A673 (cell line): ENCODE measurements at regions of chr17 and their contacts with region 1.

Region 1: DNA sequence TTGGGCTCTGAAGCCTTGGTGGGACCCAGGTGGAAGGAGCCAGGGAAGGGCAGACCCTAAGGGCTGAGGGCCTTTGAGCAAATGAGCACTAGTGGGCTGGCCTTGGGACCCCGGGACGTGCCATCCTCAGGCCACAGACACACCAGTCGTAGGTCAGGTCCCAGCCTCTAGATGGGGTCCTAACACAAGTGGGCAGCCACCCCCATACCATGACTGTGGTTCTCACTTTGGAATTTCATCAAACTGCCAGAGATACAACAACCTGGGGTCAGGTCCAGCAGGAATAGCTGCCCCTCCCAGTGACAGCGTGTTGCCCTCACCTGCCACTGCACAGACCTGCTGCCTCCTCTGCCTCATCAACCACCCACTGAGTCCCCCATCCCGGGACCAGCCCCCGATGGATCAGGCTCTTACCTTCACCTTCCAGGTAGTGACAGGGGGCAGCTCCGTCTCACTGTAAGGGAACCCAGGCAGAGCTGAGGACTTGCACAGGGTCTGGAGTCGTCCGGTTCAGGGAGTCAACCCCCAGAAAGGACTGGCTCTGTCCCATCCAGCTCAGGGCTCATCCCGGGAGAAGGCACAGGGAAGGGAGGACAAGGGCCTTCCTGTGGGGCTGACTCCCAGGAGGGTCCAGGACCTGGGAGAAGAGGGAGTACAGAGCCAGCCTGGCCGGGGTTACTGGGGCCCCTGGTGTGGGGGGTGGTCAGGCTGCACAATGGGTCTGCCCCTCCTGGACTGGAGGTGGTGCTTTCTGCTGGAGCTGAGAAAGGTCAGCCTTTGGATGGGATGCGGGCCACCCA is 40.0 kb downstream of the LGALS9 start:
- DNase-seq: no peak
- H3K4me3 ChIP-seq: no peak overlapping the region
- H3K27ac ChIP-seq: no peak overlapping the region
- H3K4me1 ChIP-seq: no peaks in the 10 kb centered on the region
- H3K27me3 ChIP-seq: no peaks in the 10 kb centered on the region
- CTCF ChIP-seq: no peak

Region 2: GRCh38 chr17:27609611-27610303 is 61.2 kb before region 1 on chr17:
- CTCF ChIA-PET with region 1: no interaction called
- POLR2A ChIA-PET with region 1: no interaction called
- intact Hi-C with region 1: no loop called
- DNase-seq: peak; percentile 25
- H3K4me3 ChIP-seq: no peak overlapping the region
- H3K27ac ChIP-seq: no peak overlapping the region
- H3K4me1 ChIP-seq: no peaks in the 10 kb centered on the region
- H3K27me3 ChIP-seq: no peaks in the 10 kb centered on the region
- CTCF ChIP-seq: peak; percentile 58

Region 3: DNA sequence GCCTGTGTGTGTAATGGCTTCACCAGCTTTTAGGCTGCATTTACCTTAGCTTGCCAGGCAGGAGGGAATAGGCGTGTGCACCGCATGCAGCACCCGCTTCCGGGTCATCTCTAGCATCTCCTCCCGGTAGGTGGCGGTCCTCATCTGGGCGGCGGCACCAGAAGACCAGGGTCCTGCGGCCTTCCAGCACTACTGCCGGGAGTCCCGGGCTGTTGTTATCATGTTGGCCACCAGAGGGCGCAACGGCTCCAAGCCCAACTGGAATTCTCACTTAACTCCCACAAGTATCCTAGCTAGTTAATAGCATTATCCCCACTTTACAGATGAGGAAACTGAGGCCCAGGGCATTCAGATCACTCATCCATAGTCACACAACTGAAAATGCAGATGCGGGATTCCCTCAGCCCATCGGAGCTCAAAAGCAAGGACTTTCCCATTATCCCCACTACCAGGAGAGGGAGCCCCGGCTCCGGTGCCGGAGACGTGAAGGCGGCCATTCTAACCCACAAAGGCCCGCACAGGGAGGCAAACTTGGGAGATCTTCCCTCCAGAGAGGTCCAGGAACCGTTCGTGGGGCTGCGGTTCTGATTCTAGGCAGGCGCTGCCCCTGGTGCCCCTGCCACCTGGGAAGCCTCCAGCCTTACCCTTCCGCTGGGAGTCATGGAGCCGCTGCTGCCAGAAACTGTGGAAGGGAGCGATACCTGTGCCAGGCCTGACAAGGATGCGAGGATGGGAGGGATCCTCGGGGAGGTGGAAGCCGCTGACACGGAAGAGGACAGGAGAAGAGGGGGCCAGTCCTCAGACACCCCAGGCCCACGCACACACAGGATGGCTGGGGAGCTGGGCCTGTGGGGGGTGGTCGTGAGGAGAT is 16.1 kb before region 1 on chr17:
- CTCF ChIA-PET with region 1: interaction called, 14 read pairs
- POLR2A ChIA-PET with region 1: no interaction called
- intact Hi-C with region 1: no loop called
- DNase-seq: peak; percentile 77
- H3K4me3 ChIP-seq: no peak overlapping the region
- H3K27ac ChIP-seq: no peak overlapping the region
- H3K4me1 ChIP-seq: no peaks in the 10 kb centered on the region
- H3K27me3 ChIP-seq: no peaks in the 10 kb centered on the region
- CTCF ChIP-seq: peak; percentile 95

Region 4: GRCh38 chr17:27721797-27722196 is 50.8 kb after region 1 on chr17:
- CTCF ChIA-PET with region 1: no interaction called
- POLR2A ChIA-PET with region 1: no interaction called
- intact Hi-C with region 1: loop called (anchors 5 kb)
- DNase-seq: no peak
- H3K4me3 ChIP-seq: no peak overlapping the region
- H3K27ac ChIP-seq: no peak overlapping the region
- H3K4me1 ChIP-seq: no peaks in the 10 kb centered on the region
- H3K27me3 ChIP-seq: no peaks in the 10 kb centered on the region
- CTCF ChIP-seq: no peak

Region 5: DNA sequence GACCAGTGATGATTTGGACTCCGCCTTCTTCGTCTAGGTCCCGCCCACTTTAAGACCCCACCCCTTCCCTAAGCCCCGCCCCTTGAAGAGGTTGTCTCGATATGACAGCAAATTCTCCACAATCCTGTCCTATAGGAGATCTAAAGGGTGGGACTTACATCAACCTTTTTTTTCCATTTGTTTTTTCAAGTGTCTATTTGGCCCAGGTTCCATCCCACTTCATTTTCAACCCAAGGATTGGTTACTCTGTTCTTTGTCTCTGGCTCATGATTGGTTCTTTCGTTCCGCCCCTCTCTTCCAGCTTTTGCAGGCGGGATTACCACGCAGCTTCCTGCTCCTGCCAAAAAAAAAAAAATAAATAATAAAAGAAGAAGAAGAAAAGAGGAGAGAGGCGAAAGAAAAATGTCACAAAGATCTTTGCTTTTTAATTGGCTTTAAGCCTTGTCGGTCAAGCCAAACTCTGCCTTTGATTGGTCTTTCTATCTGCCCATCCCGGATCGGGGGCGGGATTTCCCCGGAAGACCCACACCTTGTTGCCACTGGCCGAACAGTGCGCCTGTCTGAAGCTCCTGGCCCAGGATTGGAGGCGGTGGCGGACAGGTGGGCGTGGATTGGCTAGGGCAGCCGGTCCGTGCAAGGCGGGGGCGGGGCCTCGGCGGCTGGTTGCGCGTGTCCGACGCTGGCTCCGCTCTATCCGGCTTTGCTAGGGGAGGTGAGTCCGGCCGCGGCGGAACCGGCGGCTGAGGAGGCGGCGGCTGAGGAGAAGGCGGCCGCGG is 370.3 kb after region 1 on chr17:
- CTCF ChIA-PET with region 1: no interaction called
- POLR2A ChIA-PET with region 1: no interaction called
- intact Hi-C with region 1: no loop called
- DNase-seq: peak; percentile 100
- H3K4me3 ChIP-seq: peak overlapping the region; percentile 73
- H3K27ac ChIP-seq: peak overlapping the region; percentile 77
- H3K4me1 ChIP-seq: peaks cover 22% of the 10 kb centered on the region
- H3K27me3 ChIP-seq: no peaks in the 10 kb centered on the region
- CTCF ChIP-seq: no peak